GM12878 (cell line): ENCODE measurements at regions of chr10 and their contacts with region 1.

Region 1: GRCh38 chr10:110273474-110273873 is 31.2 kb downstream of the SMNDC1 start:
- DNase-seq: peak; percentile 28
- ATAC-seq: peak; percentile 88
- H3K4me3 ChIP-seq: peak overlapping the region; percentile 10; the same call in 1 of the 2 replicates
- H3K27ac ChIP-seq: no peak overlapping the region
- H3K4me1 ChIP-seq: peaks cover 7% of the 10 kb centered on the region
- H3K27me3 ChIP-seq: no peaks in the 10 kb centered on the region; a peak in 2 of 4 replicates
- CTCF ChIP-seq: no peak
- EP300 ChIP-seq: no peak
- POLR2A ChIP-seq: no peak
- RAD21 ChIP-seq: no peak

Region 2: GRCh38 chr10:110252151-110252550 is 21.3 kb before region 1 on chr10:
- CTCF ChIA-PET with region 1: interaction called, 7 read pairs
- POLR2A ChIA-PET with region 1: interaction called, 5 read pairs
- RAD21 ChIA-PET with region 1: interaction called, 4 read pairs
- SMC1A ChIA-PET with region 1: interaction called, 13 read pairs
- in situ Hi-C with region 1: no loop called
- intact Hi-C with region 1: loop called (anchors 1 kb)
- DNase-seq: no peak
- ATAC-seq: no peak
- H3K4me3 ChIP-seq: no peak overlapping the region
- H3K27ac ChIP-seq: no peak overlapping the region
- H3K4me1 ChIP-seq: peaks cover 19% of the 10 kb centered on the region
- H3K27me3 ChIP-seq: peaks cover 0 to 2% of the 10 kb centered on the region in 2 experiments; a peak in 1 of 4 replicates
- CTCF ChIP-seq: no peak
- EP300 ChIP-seq: no peak
- POLR2A ChIP-seq: no peak
- RAD21 ChIP-seq: no peak

Region 3: DNA sequence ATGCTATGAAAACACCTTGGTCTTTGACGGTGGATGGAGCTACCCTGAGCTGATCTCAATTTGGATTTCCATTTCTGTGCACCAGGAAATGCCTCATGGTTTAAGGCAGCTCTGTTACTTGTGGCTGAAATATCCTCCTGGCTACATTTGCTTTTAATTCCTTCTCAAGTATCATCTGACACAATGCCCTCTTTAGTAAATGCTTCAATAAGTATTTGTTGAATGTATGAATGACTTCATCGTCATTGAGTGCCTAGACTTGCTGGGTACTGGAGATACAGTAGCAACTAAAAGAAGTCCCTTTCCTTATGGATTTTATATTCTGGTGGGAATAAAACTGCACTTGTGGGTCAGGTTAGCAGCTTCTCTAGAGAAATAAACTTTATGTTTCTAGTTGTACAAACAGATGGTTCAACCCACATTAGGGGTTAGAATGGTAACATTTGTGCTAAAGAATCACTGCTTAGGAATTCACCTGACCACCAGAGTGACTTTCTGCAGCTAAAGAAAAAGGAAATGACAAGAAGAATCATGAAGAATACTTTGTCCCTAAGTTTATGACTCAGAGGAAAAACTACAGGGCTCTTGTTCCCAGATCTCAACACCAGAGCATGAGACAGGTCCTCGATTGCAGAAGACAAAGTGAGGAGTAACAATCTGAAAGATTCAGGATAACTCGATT is 53.0 kb after region 1 on chr10:
- CTCF ChIA-PET with region 1: no interaction called
- POLR2A ChIA-PET with region 1: no interaction called
- RAD21 ChIA-PET with region 1: no interaction called
- SMC1A ChIA-PET with region 1: no interaction called
- in situ Hi-C with region 1: no loop called
- intact Hi-C with region 1: no loop called
- DNase-seq: peak; percentile 51
- ATAC-seq: peak; percentile 49
- H3K4me3 ChIP-seq: no peak overlapping the region
- H3K27ac ChIP-seq: peak overlapping the region; percentile 79
- H3K4me1 ChIP-seq: peaks cover 39% of the 10 kb centered on the region
- H3K27me3 ChIP-seq: no peaks in the 10 kb centered on the region
- CTCF ChIP-seq: no peak
- EP300 ChIP-seq: peak in 1 of 2 experiments; percentile 60; a peak in 1 of 4 replicates
- POLR2A ChIP-seq: no peak
- RAD21 ChIP-seq: no peak